ENCODE measurements at regions of chr4 and their contacts with region 1.

Region 1: DNA sequence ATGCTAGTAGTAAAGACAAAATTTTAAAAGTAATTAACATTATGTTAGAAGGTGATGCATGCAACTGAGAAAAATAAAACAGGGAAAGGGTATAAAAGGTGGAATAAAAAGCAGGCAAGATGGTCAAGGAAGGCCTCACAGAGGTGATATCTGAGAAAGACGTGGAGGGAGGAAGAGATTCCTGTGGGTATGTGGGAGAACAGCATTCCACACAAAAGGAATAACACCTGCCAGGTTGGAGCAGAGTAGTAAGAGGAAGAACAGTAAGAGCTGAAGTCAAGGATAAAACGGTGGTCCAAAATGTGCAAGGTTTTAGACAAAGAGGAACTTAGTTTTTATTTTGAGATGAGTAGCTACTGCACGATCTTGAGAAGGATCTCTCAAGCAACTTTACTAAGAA is 19.3 kb downstream of the RBPJ start:
- DNase-seq: no peak
- H3K4me3 Mint-ChIP-seq: no peak overlapping the region
- H3K27ac Mint-ChIP-seq: no peak overlapping the region
- H3K4me1 Mint-ChIP-seq: peaks cover 41% of the 10 kb centered on the region
- H3K27me3 Mint-ChIP-seq: no peaks in the 10 kb centered on the region

Region 2: GRCh38 chr4:25862411-25863346 is 477.4 kb before region 1 on chr4 and contains the start of gene SEL1L3:
- intact Hi-C with region 1: no loop called
- DNase-seq: peak; percentile 86
- H3K4me3 Mint-ChIP-seq: peak within 1 kb of the TSS; percentile 99
- H3K27ac Mint-ChIP-seq: peak within 1 kb of the TSS; percentile 100
- H3K4me1 Mint-ChIP-seq: peaks cover 30% of the 10 kb centered on the region
- H3K27me3 Mint-ChIP-seq: peaks cover 2% of the 10 kb centered on the region
- total RNA-seq, gene SEL1L3: 33.9 and 35.3 TPM in 2 replicates

Region 3: DNA sequence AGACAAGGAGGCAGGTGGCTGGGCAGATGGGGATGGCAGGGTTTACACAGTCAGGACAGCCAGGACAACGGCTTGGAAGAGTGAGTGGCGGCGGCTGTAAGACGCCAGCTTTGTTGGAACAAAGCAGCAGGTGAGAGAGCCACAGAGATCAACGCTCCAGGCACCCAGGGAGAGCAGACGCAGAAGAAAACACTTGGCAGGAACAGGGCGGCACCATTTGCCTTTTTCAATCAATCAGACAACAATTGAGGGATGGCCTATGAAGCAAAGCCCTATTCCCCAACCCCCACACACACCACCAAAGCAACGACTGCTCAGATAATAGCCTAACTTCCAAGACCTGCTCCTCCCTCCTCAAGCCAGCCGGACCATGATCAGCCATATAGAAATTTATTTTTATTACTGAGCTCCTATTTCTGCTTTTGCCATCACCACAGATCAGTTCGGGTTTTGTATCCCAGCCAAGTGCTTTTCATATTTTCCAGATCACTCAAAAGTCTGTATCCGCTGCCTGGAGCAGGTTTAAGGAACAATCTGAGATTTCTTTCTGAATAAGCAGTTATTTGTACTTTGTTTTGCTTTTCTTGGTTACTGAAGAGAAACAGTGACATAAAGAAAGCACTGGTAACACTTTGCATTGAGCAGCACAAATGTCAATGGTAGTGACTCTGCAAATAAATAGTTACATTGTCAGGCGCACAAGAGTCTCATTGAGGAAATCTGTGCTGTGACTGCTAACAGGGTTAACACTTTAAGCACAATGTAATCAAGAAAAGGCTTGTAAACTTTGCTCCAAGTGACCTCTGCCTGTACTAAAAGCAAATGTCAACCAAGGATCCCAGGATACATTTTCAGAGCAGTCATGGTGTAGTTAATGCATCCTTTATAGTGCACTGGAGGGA is 101.1 kb before region 1 on chr4:
- intact Hi-C with region 1: no loop called
- DNase-seq: no peak
- H3K4me3 Mint-ChIP-seq: no peak overlapping the region
- H3K27ac Mint-ChIP-seq: peak overlapping the region; percentile 83
- H3K4me1 Mint-ChIP-seq: peaks cover 9% of the 10 kb centered on the region
- H3K27me3 Mint-ChIP-seq: no peaks in the 10 kb centered on the region

Region 4: DNA sequence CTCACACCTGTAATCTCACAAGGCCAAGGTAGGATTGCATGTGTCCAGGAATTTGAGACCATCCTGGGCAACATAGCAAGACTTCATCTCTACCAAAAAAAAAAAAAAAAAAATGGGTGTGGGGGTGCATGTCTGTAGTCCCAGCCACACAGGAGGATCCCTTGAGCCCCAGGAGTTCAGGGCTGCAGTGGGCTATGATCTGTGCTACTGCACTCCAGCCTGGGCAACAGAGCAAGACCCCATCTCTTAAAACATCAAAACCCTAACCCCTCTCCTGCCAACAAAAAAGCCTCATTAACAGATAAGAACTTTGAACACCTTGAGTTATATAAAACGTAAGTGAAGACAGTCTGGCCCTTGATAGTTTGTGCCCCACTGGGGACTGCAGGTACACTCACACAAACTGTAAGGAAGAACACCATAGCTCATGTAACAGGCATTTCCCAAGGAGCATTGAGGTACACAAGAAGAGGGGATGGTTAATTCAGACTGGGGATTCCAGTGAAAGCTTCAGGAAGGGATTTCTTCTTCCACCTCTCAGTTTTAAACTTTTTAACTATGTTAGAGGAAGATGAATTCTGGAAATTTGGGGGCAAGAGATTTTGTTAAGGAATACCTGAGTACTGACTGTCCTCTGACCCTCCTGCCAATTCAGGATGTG is 15.4 kb after region 1 on chr4:
- intact Hi-C with region 1: loop called (anchors 2 kb)
- DNase-seq: no peak
- H3K4me3 Mint-ChIP-seq: no peak overlapping the region
- H3K27ac Mint-ChIP-seq: no peak overlapping the region
- H3K4me1 Mint-ChIP-seq: peaks cover 24% of the 10 kb centered on the region
- H3K27me3 Mint-ChIP-seq: no peaks in the 10 kb centered on the region